HEK293T (cell line): ENCODE measurements at regions of chr20 and their contacts with region 1.

Region 1: GRCh38 chr20:31661625-31662371 is 24.1 kb downstream of the COX4I2 start:
- DNase-seq: peak; percentile 91

Region 2: DNA sequence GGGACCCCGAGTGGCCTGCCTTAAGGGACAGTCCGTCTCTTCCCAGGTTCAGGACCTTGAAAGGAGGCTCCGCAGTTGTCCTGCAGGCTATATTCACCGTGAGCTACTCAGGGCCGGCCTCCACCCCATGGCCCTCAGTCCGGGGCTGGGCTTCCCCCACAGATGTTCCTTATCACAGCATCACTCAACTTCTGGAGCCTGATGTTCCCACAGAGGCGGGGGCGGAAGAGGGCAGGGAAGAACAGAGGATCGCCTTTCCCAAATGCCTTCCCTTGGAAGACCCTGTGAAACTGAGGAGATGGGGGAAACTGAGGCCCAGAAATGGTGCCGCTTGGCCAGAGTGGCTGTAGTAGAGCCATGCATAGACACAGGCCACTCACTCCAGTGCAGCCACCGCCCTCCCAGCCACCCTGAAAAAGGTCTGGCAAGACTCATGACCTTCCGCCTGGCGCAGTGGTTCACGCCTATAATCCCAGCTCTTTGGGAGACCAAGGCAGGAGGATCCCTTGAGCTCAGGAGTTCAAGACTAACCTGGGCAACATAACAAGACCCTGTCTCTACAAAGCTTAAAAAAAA is 28.4 kb before region 1 on chr20:
- CTCF ChIA-PET with region 1: interaction called, 22 read pairs
- POLR2A ChIA-PET with region 1: interaction called, 9 read pairs
- DNase-seq: no peak

Region 3: DNA sequence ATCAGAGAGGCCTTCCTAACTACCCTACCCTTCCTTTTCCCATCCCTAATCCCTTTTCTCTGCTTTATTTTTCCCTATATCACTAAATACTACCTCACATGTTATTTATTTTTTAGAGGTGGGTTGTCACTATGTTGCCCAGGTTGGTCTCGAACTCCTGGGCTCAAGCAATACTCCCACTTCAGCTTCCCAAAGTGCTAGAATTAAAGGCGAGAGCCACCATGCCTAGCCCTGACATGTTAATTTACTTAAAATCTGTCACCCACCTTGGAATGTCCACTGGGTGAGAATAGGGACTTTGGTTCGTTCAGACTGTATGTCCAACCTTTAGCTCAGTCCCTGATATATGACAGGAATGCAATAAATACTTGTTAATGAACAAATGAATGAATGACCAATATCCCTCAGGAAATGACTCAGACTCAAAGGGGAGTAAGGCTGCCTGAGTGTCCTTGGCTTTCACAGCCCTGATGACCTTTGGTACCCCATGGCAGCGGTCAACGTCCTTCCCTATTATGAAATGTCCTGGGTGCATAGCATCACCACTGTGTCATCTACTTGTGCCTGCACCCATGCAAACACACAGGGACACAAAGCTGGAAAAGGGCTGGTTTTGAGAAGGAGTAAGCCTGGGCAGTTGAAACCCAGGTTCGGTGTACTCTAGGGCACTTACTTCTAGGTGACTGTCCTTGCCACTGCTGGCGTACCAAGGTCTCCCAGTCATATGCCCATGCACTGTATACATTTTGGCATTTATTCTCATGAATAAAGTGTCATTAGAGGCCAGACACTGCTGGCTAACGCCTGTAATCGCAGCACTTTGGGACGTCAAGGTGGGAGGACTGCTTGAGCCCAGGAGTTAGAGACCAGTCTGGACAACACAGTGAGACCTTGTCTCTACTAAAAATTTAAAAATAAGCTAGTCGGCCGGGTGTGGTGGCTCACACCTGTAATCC is 34.3 kb after region 1 on chr20:
- CTCF ChIA-PET with region 1: interaction called, 11 read pairs
- POLR2A ChIA-PET with region 1: interaction called, 3 read pairs
- DNase-seq: no peak

Region 4: GRCh38 chr20:31723319-31724078 is 61.7 kb after region 1 on chr20:
- CTCF ChIA-PET with region 1: interaction called, 104 read pairs
- POLR2A ChIA-PET with region 1: interaction called, 114 read pairs
- DNase-seq: peak; percentile 98

Region 5: DNA sequence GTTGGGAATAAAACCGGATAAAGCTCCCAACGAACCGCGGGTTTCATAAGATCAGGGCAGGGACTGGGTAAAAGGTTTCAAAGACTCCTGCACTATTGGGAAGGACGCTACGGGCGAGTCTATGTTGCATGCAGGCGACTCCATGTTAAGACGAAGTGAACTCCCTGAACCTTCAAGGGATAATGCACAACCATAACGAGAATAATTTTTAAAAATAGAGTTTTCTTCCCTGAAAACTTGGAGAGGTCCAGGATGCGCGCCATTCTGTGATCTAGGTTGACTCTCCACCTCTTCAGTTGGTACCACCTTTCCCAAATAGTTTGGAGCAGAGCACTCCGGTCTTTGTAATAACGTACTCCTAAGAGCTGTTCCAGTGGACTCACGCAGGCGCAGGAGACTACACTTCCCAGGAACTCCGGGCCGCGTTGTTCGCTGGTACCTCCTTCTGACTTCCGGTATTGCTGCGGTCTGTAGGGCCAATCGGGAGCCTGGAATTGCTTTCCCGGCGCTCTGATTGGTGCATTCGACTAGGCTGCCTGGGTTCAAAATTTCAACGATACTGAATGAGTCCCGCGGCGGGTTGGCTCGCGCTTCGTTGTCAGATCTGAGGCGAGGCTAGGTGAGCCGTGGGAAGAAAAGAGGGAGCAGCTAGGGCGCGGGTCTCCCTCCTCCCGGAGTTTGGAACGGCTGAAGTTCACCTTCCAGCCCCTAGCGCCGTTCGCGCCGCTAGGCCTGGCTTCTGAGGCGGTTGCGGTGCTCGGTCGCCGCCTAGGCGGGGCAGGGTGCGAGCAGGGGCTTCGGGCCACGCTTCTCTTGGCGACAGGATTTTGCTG is 77.1 kb after region 1 on chr20 and contains the start of gene TPX2:
- CTCF ChIA-PET with region 1: no interaction called
- POLR2A ChIA-PET with region 1: interaction called, 10 read pairs
- DNase-seq: peak; percentile 98

Region 6: DNA sequence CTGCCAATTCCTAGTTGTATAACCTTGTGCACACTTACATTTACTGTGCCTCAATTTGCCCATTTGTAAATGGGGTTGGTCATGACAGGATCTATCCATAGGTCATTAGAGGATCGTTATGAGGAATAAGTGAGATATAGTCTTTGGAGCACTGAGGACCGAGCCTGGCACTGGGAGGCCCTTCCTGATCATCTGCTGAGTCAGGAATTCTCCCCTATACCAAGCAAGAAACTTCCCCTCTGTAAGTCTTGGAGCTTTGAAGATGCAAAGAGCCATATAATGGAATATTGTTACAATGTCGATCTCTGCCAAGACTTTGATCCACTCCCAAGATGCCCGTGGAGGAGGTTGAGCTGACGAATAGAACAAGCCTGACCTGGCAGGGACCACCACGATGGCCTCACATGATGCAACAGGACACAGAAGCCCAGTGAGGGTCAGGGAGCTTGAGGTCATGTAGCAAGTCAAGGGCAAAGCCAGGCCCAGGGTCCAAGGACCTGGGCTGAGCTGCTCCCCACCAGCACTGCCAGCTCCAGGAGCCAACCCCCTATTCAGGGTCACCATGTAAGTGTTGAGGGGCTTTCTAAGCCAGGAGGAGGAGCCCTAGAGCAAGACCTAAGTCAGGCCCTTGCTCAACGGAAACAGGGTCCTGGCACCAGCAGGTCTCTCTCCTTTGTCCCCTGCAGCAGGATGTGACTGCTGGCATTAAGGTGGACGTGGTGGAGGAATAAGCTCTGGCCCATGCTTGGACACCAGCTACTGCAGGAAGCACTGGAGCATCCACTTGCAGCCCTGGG is 273.4 kb after region 1 on chr20:
- CTCF ChIA-PET with region 1: no interaction called
- POLR2A ChIA-PET with region 1: no interaction called
- DNase-seq: no peak